RWPE1 (cell line): ENCODE measurements at regions of chr10 and their contacts with region 1.

Region 1: GRCh38 chr10:110305767-110306451 is 1.2 kb upstream of the SMNDC1 start:
- DNase-seq: peak; percentile 83
- H3K27ac ChIP-seq: peak overlapping the region; percentile 97
- CTCF ChIP-seq: peak; percentile 79

Region 2: DNA sequence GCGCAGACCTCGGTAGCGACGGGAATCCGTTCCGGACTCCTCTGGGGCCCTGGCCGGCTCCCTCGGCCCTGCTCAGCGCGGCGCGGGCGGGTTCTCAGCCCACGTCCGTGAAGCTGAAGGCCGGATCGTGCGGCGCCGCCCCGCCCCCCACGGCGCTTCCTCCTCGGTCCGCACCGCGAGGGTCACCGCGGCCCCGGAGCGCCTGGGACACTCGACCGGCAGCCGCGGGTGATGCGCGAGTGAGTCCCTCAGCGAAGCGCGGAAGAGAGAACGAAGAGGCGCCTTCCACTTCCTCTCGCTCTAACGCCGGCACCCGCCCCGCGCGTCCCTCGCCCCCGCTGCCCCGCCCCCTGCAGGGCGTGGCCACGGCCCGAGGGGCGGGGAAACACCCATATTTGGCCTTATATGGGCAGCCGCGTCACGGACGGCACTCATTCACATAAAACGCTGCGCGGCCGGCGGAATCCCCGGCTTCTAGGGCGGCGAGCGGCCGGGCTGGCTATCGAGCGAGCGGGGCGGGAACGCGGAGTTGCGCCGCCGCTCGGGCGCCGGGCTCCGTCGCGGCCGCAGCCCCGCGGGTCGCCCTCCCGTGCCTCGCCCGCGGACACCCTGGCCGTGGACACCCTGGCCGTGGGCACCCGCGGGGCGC is 191.7 kb after region 1 on chr10 and contains the start of gene DUSP5:
- CTCF ChIA-PET with region 1: interaction called, 18 read pairs
- POLR2A ChIA-PET with region 1: no interaction called
- DNase-seq: peak; percentile 96
- H3K27ac ChIP-seq: peak within 1 kb of the TSS; percentile 89
- CTCF ChIP-seq: no peak